ENCODE measurements at regions of chr5 and their contacts with region 1.

Region 1: GRCh38 chr5:95817440-95817839 is 5.1 kb downstream of the GLRX start:
- DNase-seq: peak in 2 of 3 donors; percentile 52 to 72
- H3K4me3 ChIP-seq: peak overlapping the region; percentile 87 to 100 (median 98)
- H3K4me3 Mint-ChIP-seq: peak overlapping the region; percentile 97
- H3K27ac ChIP-seq: peak overlapping the region; percentile 84 to 92
- H3K27ac Mint-ChIP-seq: peak overlapping the region; percentile 83 to 97 (median 94)
- H3K4me1 ChIP-seq: peaks cover 50 to 69% of the 10 kb centered on the region in 2 donors
- H3K4me1 Mint-ChIP-seq: peaks cover 75% of the 10 kb centered on the region
- H3K27me3 ChIP-seq: no peaks in the 10 kb centered on the region
- H3K27me3 Mint-ChIP-seq: peaks cover 0 to 1% (median 0%) of the 10 kb centered on the region in 3 donors
- CTCF ChIP-seq: no peak

Region 2: GRCh38 chr5:95781101-95781583 is 36.3 kb before region 1 on chr5:
- intact Hi-C with region 1: loop called in 1 of 2 experiments (anchors 5 kb)
- DNase-seq: peak; percentile 65 to 79 (median 78)
- H3K4me3 ChIP-seq: peak overlapping the region in 1 of 3 experiments; percentile 58
- H3K4me3 Mint-ChIP-seq: peak overlapping the region; percentile 55 to 77
- H3K27ac ChIP-seq: peak overlapping the region in 1 of 2 donors; percentile 66
- H3K27ac Mint-ChIP-seq: peak overlapping the region; percentile 22 to 88 (median 77)
- H3K4me1 ChIP-seq: peaks cover 26 to 31% of the 10 kb centered on the region in 2 donors
- H3K4me1 Mint-ChIP-seq: peaks cover 30% of the 10 kb centered on the region
- H3K27me3 ChIP-seq: no peaks in the 10 kb centered on the region
- H3K27me3 Mint-ChIP-seq: no peaks in the 10 kb centered on the region
- CTCF ChIP-seq: peak; percentile 96

Region 3: DNA sequence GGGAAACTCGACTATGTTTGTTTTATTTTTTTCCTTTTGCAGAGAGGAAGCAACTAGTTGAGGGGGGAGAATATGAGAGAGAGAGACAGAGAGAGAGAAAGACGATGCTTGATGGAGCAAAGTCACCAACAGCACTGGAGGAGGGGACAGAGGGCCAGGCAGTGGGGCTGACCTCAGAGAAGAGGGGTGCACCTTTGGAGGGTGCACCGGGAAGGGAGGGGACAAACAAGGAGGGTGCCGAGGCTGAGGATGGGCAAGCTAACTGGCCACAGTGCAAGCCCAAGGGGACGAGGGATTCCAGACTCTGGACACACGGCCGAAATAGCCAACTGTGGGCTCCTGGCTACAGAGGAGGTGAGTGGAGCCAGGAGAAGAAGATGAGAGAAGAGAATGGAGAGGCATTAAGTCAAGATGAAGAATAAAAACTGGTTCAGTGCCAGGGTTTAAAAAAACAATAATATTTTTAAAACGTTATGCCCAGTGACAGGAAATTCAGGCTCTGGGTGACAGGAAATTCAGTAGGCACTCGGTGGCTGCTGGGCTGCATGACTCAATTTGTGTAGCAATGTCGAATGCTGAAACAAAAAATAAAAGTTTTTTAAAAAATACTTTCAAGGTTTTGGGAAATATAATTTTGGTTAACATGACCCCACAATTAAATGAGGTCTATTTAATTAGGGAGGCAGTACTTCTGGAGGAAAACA is 18.4 kb after region 1 on chr5:
- intact Hi-C with region 1: loop called in 1 of 2 experiments (anchors 2 kb)
- DNase-seq: peak; percentile 54 to 77 (median 75)
- H3K4me3 ChIP-seq: peak overlapping the region; percentile 59 to 79 (median 68)
- H3K4me3 Mint-ChIP-seq: peak overlapping the region; percentile 87 to 99
- H3K27ac ChIP-seq: peak overlapping the region; percentile 87 to 89
- H3K27ac Mint-ChIP-seq: peak overlapping the region; percentile 96 to 99 (median 98)
- H3K4me1 ChIP-seq: peaks cover 68 to 69% of the 10 kb centered on the region in 2 donors
- H3K4me1 Mint-ChIP-seq: peaks cover 77% of the 10 kb centered on the region
- H3K27me3 ChIP-seq: no peaks in the 10 kb centered on the region
- H3K27me3 Mint-ChIP-seq: peaks cover 0 to 1% (median 0%) of the 10 kb centered on the region in 3 donors
- CTCF ChIP-seq: no peak